Activated B cell treated with CpG ODN at 0.5 μM for 24 hours (primary cell): ENCODE measurements at regions of chr21 and their contacts with region 1.

Region 1: GRCh38 chr21:15754640-15755039 is 24.9 kb downstream of the USP25 start:
- DNase-seq: no peak
- ATAC-seq: no peak
- H3K4me3 Mint-ChIP-seq: no peak overlapping the region
- H3K27ac Mint-ChIP-seq: no peak overlapping the region
- H3K4me1 Mint-ChIP-seq: peaks cover 81% of the 10 kb centered on the region
- H3K27me3 Mint-ChIP-seq: no peaks in the 10 kb centered on the region
- CTCF ChIP-seq: no peak

Region 2: GRCh38 chr21:15742052-15742670 is 12.5 kb before region 1 on chr21:
- CTCF ChIA-PET with region 1: no interaction called
- POLR2A ChIA-PET with region 1: interaction called, 4 read pairs
- intact Hi-C with region 1: loop called (anchors 2 kb)
- DNase-seq: no peak
- ATAC-seq: no peak
- H3K4me3 Mint-ChIP-seq: peak overlapping the region; percentile 21
- H3K27ac Mint-ChIP-seq: peak overlapping the region; percentile 53
- H3K4me1 Mint-ChIP-seq: peaks cover 65% of the 10 kb centered on the region
- H3K27me3 Mint-ChIP-seq: no peaks in the 10 kb centered on the region
- CTCF ChIP-seq: no peak

Region 3: DNA sequence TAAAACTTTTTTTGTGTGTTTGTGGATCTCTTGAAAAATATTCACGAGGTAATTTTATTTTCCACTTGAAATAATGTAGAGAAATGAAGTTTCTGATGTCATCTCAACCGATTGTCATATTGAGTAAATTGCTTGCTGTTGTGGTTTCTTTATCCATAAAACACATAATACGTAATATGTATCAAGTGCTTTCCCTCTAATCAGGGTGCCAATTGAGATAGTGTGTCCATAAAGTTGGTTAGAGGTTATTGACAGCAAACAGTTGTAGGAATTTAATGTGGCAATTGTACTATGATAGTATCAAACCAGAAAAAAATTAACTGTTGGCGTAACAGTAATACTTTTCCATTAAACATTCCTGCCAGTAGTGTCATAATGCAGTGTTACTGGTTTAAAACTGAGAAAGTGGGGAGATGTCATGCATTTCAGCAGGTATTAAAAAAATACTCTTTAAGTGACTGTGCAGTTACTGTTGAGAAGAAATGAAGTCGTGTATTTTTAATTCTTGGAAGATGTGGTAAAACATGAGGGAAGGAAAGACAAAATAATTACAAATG is 13.5 kb after region 1 on chr21:
- CTCF ChIA-PET with region 1: no interaction called
- POLR2A ChIA-PET with region 1: no interaction called
- intact Hi-C with region 1: loop called (anchors 2 kb)
- DNase-seq: no peak
- ATAC-seq: no peak
- H3K4me3 Mint-ChIP-seq: no peak overlapping the region
- H3K27ac Mint-ChIP-seq: no peak overlapping the region
- H3K4me1 Mint-ChIP-seq: peaks cover 7% of the 10 kb centered on the region
- H3K27me3 Mint-ChIP-seq: no peaks in the 10 kb centered on the region
- CTCF ChIP-seq: no peak

Region 4: GRCh38 chr21:15788847-15789493 is 34.3 kb after region 1 on chr21:
- CTCF ChIA-PET with region 1: no interaction called
- POLR2A ChIA-PET with region 1: no interaction called
- intact Hi-C with region 1: no loop called
- DNase-seq: no peak
- ATAC-seq: no peak
- H3K4me3 Mint-ChIP-seq: no peak overlapping the region
- H3K27ac Mint-ChIP-seq: no peak overlapping the region
- H3K4me1 Mint-ChIP-seq: peaks cover 2% of the 10 kb centered on the region
- H3K27me3 Mint-ChIP-seq: no peaks in the 10 kb centered on the region
- CTCF ChIP-seq: no peak

Region 5: GRCh38 chr21:16624479-16625118 is 870.0 kb after region 1 on chr21:
- CTCF ChIA-PET with region 1: no interaction called
- POLR2A ChIA-PET with region 1: no interaction called
- intact Hi-C with region 1: no loop called
- DNase-seq: no peak
- ATAC-seq: no peak
- H3K4me3 Mint-ChIP-seq: no peak overlapping the region
- H3K27ac Mint-ChIP-seq: no peak overlapping the region
- H3K4me1 Mint-ChIP-seq: no peaks in the 10 kb centered on the region
- H3K27me3 Mint-ChIP-seq: no peaks in the 10 kb centered on the region
- CTCF ChIP-seq: no peak